OCI-LY7 (cell line): ENCODE measurements at regions of chr10 and their contacts with region 1.

Region 1: GRCh38 chr10:52883996-52884871 is 111.7 kb upstream of the MBL2 start:
- DNase-seq: peak; percentile 50
- H3K4me3 ChIP-seq: no peak overlapping the region
- H3K27ac ChIP-seq: no peak overlapping the region
- H3K4me1 ChIP-seq: no peaks in the 10 kb centered on the region
- CTCF ChIP-seq: peak; percentile 87

Region 2: GRCh38 chr10:52818019-52818418 is 66.2 kb before region 1 on chr10:
- CTCF ChIA-PET with region 1: no interaction called
- POLR2A ChIA-PET with region 1: interaction called, 4 read pairs
- intact Hi-C with region 1: loop called (anchors 2 kb)
- DNase-seq: peak; percentile 80
- H3K4me3 ChIP-seq: no peak overlapping the region
- H3K27ac ChIP-seq: no peak overlapping the region
- H3K4me1 ChIP-seq: peaks cover 35% of the 10 kb centered on the region
- CTCF ChIP-seq: peak; percentile 90

Region 3: GRCh38 chr10:52923520-52923919 is 39.3 kb after region 1 on chr10:
- CTCF ChIA-PET with region 1: no interaction called
- POLR2A ChIA-PET with region 1: no interaction called
- intact Hi-C with region 1: no loop called
- DNase-seq: no peak
- H3K4me3 ChIP-seq: no peak overlapping the region
- H3K27ac ChIP-seq: no peak overlapping the region
- H3K4me1 ChIP-seq: no peaks in the 10 kb centered on the region
- CTCF ChIP-seq: no peak

Region 4: DNA sequence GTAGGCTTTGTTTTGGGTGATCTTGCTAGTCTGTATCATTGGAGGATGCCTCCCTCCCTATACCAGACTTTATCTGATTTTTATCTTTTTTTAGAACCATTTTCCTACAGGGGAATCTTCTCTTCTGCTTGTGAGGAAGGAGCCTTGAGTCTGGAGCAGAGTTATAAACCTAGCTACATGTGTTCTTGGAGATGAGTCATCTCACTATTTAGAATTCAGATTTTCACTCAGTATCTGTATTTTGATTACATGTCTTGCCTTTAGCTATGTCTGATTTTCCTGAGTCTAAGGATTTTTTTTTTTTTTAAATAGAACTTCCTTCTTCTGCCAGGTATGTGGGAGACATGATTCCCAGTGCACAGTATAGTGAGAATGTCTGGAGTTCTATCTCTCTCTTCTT is 99.9 kb after region 1 on chr10:
- CTCF ChIA-PET with region 1: no interaction called
- POLR2A ChIA-PET with region 1: no interaction called
- intact Hi-C with region 1: no loop called
- DNase-seq: no peak
- H3K4me3 ChIP-seq: no peak overlapping the region
- H3K27ac ChIP-seq: no peak overlapping the region
- H3K4me1 ChIP-seq: no peaks in the 10 kb centered on the region
- CTCF ChIP-seq: no peak

Region 5: DNA sequence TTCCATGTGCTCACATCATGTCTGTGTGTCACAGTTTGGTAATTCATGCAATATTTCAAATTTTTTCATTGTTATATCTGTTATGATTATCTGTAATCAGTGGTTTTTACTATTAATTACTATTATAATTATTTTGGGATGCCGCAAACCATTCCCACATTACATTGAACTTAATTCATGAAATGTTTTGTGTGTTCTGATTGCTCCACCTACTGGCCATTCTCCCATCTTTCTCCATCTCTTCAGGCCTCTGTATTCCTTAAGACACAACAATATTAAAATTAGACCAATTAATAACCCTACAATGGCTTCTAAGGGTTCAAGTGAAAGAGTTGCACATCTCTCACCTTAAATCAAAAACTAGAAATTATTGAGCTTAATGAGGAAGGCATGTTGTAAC is 1518.3 kb after region 1 on chr10:
- CTCF ChIA-PET with region 1: no interaction called
- POLR2A ChIA-PET with region 1: no interaction called
- intact Hi-C with region 1: loop called (anchors 10 kb)
- DNase-seq: peak; percentile 4
- H3K4me3 ChIP-seq: no peak overlapping the region
- H3K27ac ChIP-seq: no peak overlapping the region
- H3K4me1 ChIP-seq: no peaks in the 10 kb centered on the region
- CTCF ChIP-seq: peak; percentile 76